ENCODE measurements at regions of chr6 and their contacts with region 1.

Region 1: GRCh38 chr6:3125815-3126214 is 7.3 kb downstream of the BPHL start:
- DNase-seq: no peak
- H3K4me3 ChIP-seq: no peak overlapping the region
- H3K4me3 Mint-ChIP-seq: no peak overlapping the region
- H3K27ac ChIP-seq: no peak overlapping the region
- H3K27ac Mint-ChIP-seq: no peak overlapping the region
- H3K4me1 ChIP-seq: peaks cover 0 to 3% of the 10 kb centered on the region in 2 donors
- H3K4me1 Mint-ChIP-seq: no peaks in the 10 kb centered on the region
- H3K27me3 ChIP-seq: no peaks in the 10 kb centered on the region
- H3K27me3 Mint-ChIP-seq: peaks cover 0 to 8% (median 0%) of the 10 kb centered on the region in 3 donors
- CTCF ChIP-seq: no peak

Region 2: DNA sequence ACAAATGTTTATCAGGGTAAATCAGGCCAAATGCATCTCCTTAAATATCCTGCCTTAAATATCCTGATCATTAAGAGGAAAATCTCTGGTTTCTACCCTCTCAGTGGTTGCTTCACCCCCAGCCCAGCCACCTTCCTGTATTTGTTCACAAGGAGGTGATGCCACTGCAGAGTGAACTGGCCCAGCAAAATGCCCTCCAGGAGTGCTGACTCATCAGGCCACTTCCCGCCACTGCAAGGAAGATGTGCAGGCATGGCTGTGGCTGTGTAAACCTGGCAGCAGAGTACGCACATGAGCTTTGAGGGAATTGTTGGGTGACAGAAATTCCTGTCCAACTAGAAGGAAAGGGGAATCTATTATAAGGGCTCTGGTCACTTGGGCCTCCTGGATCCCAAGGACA is 112.3 kb before region 1 on chr6:
- intact Hi-C with region 1: no loop called
- DNase-seq: peak; percentile 85 to 92 (median 91)
- H3K4me3 ChIP-seq: no peak overlapping the region
- H3K4me3 Mint-ChIP-seq: peak overlapping the region in 1 of 2 donors; percentile 26
- H3K27ac ChIP-seq: peak overlapping the region; percentile 41 to 73
- H3K27ac Mint-ChIP-seq: peak overlapping the region; percentile 86 to 96 (median 92)
- H3K4me1 ChIP-seq: peaks cover 17 to 19% of the 10 kb centered on the region in 2 donors
- H3K4me1 Mint-ChIP-seq: peaks cover 16% of the 10 kb centered on the region
- H3K27me3 ChIP-seq: no peaks in the 10 kb centered on the region
- H3K27me3 Mint-ChIP-seq: peaks cover 0 to 7% (median 3%) of the 10 kb centered on the region in 3 donors
- CTCF ChIP-seq: no peak

Region 3: DNA sequence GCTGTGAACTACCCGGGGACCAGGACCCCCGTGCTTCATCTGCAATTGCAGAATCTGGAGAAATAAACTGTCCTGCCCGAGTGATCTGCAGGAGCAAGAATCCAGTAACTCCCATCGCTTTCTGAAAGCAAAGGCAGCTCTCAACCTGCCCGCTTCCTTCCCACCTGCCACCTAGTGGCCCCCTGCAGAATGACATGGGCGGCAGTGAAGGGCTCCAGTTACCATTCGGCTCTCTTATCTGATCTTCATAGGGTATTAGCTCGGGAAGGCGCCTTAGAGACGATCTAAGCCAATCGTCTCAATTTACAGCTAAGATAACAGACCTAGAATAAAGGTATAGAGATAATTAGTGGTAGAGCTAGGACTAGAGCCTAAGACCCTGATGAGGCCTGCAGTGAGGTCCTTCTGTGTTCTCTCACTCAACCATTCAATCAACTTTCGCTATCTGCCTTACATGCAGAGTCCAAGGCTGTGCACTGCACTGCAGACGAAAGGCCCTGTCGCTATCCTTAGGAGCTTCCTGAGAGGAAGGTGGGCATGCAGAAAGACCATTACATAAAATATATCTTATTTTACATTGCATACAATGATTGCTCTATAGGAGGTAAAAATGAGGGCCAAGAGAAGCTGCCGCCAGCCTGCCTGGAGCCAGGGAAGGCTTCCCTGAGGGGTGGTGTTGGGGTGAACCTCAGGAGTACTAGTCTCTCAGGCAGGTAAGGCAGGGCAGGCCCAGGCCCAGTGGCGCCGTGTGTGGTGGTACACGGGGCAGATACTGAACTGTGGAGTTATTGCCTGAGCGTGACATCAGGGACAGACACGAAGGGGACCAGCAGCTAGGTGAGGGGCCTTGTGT is 125.9 kb after region 1 on chr6:
- intact Hi-C with region 1: loop called (anchors 1 to 2 kb)
- DNase-seq: peak; percentile 54 to 64 (median 63)
- H3K4me3 ChIP-seq: peak overlapping the region in 1 of 3 experiments; percentile 59
- H3K4me3 Mint-ChIP-seq: peak overlapping the region; percentile 56 to 84
- H3K27ac ChIP-seq: no peak overlapping the region
- H3K27ac Mint-ChIP-seq: peak overlapping the region in 1 of 7 donors; percentile 69
- H3K4me1 ChIP-seq: peaks cover 5 to 13% of the 10 kb centered on the region in 2 donors
- H3K4me1 Mint-ChIP-seq: peaks cover 10% of the 10 kb centered on the region
- H3K27me3 ChIP-seq: peaks cover 0 to 31% of the 10 kb centered on the region in 2 donors
- H3K27me3 Mint-ChIP-seq: peaks cover 37 to 46% (median 40%) of the 10 kb centered on the region in 3 donors
- CTCF ChIP-seq: peak; percentile 96